ENCODE measurements at regions of chrX and their contacts with region 1.

Region 1: DNA sequence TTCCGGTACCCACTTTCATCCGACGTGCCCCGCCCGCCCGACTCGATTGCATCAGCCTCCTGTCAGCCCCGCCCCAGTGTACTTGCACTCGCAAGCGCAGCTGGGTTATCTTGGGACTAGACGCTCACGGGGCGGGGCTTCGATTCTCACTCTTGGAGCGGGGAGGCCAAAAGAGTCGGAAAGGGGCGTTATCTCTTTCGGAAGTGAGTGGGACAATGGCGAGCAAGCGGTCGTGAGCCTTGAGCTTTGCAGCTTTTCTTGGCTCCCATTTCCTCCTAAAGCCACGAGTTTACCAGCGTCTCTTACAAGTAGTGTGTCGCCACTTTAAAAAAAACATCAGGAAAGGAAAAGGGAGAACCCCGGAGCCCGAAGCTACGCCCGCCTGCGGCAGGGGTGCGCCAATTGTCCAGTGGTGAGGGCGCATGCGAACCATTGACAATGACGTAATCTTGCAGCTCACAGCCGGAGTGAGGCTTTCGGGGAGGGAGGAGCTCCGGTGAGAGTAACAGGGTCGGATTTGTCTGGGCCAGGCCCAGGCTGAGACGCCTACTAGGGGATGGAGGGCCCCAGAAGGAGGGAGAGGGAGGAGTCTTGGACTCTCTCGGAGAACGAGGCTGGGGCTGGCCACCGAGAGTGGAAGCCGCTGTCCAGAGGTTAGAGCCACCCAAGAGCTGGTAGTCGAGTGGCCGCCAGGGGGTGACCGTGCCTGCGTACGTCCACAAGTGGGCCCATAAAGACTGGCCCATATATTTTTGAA is 109.5 kb downstream of the GNL3L start:
- DNase-seq: peak; percentile 97 to 98
- ATAC-seq: peak; percentile 98
- H3K4me3 ChIP-seq: no peak overlapping the region
- H3K27ac ChIP-seq: peak overlapping the region; percentile 49 to 68
- H3K4me1 ChIP-seq: no peaks in the 10 kb centered on the region
- H3K27me3 ChIP-seq: no peaks in the 10 kb centered on the region

Region 2: DNA sequence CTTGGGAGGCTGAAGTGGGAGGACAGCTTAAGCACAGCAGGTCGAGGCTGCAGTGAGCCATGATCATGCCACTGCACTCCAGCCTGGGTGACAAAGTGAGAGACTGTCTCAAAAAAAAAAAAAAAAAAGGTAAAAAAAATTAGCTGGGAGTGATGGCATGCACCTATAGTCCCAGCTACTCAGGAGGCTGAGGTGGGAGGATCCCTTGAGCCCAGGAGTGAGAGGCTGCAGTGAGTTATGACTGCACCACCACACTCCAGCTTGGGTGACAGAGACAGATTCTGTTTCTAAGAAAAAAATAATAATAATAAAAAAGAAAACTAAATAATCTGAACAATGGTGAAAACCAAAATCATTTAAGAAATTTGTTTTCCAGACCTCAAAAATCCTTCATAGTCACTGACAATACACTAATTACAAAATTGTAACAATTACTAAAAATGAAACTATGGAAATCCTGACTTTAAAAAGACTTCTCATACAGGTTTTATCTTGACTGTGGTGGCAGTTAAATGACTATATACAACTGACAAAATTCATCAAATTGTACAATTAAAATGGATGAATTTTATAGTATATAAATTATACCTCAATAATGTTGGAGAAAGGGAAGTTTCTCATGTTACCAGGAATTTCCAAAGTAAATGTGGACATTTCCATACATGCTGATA is 626.6 kb before region 1 on chrX:
- intact Hi-C with region 1: no loop called
- DNase-seq: no peak
- ATAC-seq: no peak
- H3K4me3 ChIP-seq: no peak overlapping the region
- H3K27ac ChIP-seq: no peak overlapping the region
- H3K4me1 ChIP-seq: no peaks in the 10 kb centered on the region
- H3K27me3 ChIP-seq: no peaks in the 10 kb centered on the region

Region 3: DNA sequence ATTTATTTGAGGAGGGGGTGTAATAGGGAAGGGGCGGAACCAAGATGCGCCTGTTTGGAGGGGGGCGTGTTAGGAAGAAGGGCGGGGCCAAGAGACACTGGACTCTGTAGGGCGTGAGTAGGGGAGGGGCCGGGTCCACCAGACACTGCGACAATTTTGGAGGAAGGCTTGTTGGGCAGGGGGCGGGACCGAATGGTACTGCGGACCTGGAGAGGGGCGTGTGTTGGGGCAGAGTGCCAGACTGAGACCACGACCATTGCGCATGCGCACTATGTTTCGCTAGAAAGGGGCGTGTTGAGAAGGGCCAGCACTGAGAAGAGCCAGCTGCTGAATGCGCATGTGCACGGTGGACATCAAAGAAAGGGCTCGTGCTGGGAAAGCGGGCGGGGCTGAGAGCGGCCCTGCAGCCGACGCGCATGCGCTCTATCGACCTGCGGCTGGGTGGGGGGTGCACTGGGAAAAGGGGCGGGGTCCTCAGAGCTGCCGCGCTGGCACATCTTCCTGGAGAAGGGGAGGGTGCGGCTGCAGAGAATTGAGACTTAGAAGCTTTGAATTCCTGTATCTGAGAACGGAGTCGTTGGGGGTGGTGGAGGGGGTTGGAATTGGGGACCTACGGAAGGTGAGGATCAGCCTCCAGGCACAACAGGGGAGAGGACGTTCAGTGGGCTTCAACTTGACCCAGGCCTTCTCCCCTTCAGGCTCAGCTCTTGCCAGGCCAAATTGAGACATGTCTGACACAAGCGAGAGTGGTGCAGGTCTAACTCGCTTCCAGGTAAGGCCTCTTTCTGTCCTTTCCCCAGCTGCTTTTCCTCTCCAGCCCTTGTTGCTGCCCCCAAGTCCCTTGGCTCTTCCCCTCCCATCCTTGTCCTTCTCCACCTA is 169.3 kb after region 1 on chrX:
- intact Hi-C with region 1: loop called in 1 of 2 experiments (anchors 2 kb)
- DNase-seq: peak; percentile 95 to 96
- ATAC-seq: peak; percentile 93
- H3K4me3 ChIP-seq: peak overlapping the region; percentile 8 to 41
- H3K27ac ChIP-seq: peak overlapping the region in 1 of 2 donors; percentile 39
- H3K4me1 ChIP-seq: no peaks in the 10 kb centered on the region
- H3K27me3 ChIP-seq: no peaks in the 10 kb centered on the region

Region 4: GRCh38 chrX:54999717-55000598 is 360.4 kb after region 1 on chrX and contains the start of gene APEX2:
- intact Hi-C with region 1: loop called in 1 of 2 experiments (anchors 5 kb)
- DNase-seq: peak; percentile 96
- ATAC-seq: peak; percentile 95
- H3K4me3 ChIP-seq: peak within 1 kb of the TSS; percentile 27 to 53
- H3K27ac ChIP-seq: peak within 1 kb of the TSS in 1 of 2 donors; percentile 56
- H3K4me1 ChIP-seq: no peaks in the 10 kb centered on the region
- H3K27me3 ChIP-seq: no peaks in the 10 kb centered on the region
- total RNA-seq, gene APEX2: 9.9 to 10.1 TPM

Measured in aorta (tissue), 5 donors.